ENCODE measurements at regions of chr4 and their contacts with region 1.

Region 1: DNA sequence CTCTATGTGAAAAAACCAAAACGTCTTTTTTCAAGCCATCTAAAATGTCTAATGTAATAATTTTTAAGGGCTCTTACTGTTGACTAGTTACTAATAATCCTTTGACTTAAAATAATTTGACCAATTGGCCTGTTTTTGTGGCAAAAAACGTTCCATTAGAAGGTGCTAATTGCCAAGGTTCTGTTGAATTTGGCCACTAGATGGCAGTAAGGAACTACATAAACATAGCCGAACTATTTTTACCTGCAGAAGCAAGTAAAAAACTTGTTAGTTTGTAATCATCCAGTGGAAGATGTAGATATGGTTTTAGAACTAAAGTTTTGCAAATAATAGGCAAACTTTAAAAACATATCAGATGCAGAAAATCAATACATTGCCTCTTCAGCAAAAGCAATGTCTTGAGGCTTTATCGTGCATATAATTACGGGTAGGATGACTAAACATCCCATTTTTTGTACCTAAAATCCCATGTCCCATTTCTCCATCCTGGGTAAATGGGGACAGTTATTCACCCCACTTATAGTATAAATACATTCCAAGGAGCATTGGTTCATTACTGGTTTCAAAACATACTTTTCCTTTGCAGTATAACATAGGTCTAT is 57.6 kb downstream of the PROM1 start:
- DNase-seq: peak in 7 of 9 donors; percentile 21 to 64 (median 56)
- ATAC-seq: peak; percentile 34
- H3K4me3 ChIP-seq: no peak overlapping the region
- H3K4me3 Mint-ChIP-seq: no peak overlapping the region
- H3K27ac ChIP-seq: no peak overlapping the region
- H3K27ac Mint-ChIP-seq: no peak overlapping the region
- H3K4me1 ChIP-seq: no peaks in the 10 kb centered on the region
- H3K4me1 Mint-ChIP-seq: no peaks in the 10 kb centered on the region
- H3K27me3 ChIP-seq: peaks cover 0 to 4% of the 10 kb centered on the region in 2 donors
- H3K27me3 Mint-ChIP-seq: peaks cover 0 to 26% (median 14%) of the 10 kb centered on the region in 5 donors

Region 2: GRCh38 chr4:14143892-14144291 is 1882.4 kb before region 1 on chr4:
- CTCF ChIA-PET with region 1: no interaction called
- POLR2A ChIA-PET with region 1: no interaction called
- intact Hi-C with region 1: no loop called
- DNase-seq: no peak
- ATAC-seq: no peak
- H3K4me3 ChIP-seq: no peak overlapping the region
- H3K4me3 Mint-ChIP-seq: no peak overlapping the region
- H3K27ac ChIP-seq: no peak overlapping the region
- H3K27ac Mint-ChIP-seq: no peak overlapping the region
- H3K4me1 ChIP-seq: no peaks in the 10 kb centered on the region
- H3K4me1 Mint-ChIP-seq: no peaks in the 10 kb centered on the region
- H3K27me3 ChIP-seq: no peaks in the 10 kb centered on the region
- H3K27me3 Mint-ChIP-seq: no peaks in the 10 kb centered on the region

Region 3: DNA sequence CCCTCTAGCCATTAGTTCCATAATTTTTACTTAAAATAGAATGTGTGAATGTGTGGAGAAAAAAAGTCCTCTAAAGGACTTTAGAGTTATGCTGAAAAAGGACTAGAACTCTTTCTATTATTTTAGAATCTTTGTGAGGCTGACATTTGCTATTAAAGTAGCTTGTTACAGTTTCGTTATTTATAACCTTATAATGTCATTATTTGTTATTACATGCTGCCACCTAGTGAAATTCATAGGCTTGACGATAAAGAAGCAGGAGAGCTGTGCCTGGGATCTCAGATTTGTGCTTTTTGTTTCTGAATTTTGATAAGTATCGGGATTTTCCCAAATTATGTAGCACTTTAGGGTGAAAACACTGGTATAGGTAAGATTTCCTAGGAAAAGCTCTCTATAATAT is 238.5 kb after region 1 on chr4:
- CTCF ChIA-PET with region 1: interaction called, 30 read pairs
- POLR2A ChIA-PET with region 1: no interaction called
- intact Hi-C with region 1: loop called (anchors 1 kb)
- DNase-seq: peak in 7 of 9 donors; percentile 14 to 59 (median 34)
- ATAC-seq: peak; percentile 40
- H3K4me3 ChIP-seq: no peak overlapping the region
- H3K4me3 Mint-ChIP-seq: no peak overlapping the region
- H3K27ac ChIP-seq: no peak overlapping the region
- H3K27ac Mint-ChIP-seq: no peak overlapping the region
- H3K4me1 ChIP-seq: peaks cover 0 to 3% of the 10 kb centered on the region in 2 donors
- H3K4me1 Mint-ChIP-seq: peaks cover 0 to 11% (median 4%) of the 10 kb centered on the region in 7 donors
- H3K27me3 ChIP-seq: no peaks in the 10 kb centered on the region
- H3K27me3 Mint-ChIP-seq: peaks cover 0 to 2% (median 0%) of the 10 kb centered on the region in 5 donors

Region 4: GRCh38 chr4:16443504-16444088 is 417.3 kb after region 1 on chr4:
- CTCF ChIA-PET with region 1: no interaction called
- POLR2A ChIA-PET with region 1: no interaction called
- intact Hi-C with region 1: loop called in 1 of 2 experiments (anchors 1 kb)
- DNase-seq: peak in 2 of 9 donors; percentile 1 to 12
- ATAC-seq: no peak
- H3K4me3 ChIP-seq: no peak overlapping the region
- H3K4me3 Mint-ChIP-seq: no peak overlapping the region
- H3K27ac ChIP-seq: no peak overlapping the region
- H3K27ac Mint-ChIP-seq: no peak overlapping the region
- H3K4me1 ChIP-seq: no peaks in the 10 kb centered on the region
- H3K4me1 Mint-ChIP-seq: no peaks in the 10 kb centered on the region
- H3K27me3 ChIP-seq: no peaks in the 10 kb centered on the region
- H3K27me3 Mint-ChIP-seq: peaks cover 0 to 16% (median 8%) of the 10 kb centered on the region in 5 donors

Region 5: DNA sequence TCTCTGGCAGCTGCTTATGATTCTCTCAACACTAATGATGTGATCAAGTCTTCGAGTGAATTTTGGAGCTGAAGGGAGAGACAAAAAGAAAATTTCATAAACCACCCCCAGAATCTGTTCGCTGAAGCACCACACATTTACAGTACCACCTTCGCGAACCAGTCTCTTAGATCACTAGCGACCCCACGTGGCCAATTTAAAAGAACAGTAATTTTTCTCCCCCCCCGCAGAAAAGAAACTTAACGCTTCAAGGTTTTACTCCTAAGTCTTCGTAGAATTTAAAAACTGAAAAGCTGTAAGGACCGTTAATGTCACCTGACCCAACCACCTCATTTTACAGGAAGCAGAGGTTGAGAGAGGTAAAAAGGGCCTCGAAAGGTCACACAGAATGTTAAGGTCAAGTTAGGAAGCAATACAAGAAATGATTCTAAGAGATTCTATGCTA is 1298.1 kb after region 1 on chr4:
- CTCF ChIA-PET with region 1: no interaction called
- POLR2A ChIA-PET with region 1: no interaction called
- intact Hi-C with region 1: loop called in 1 of 2 experiments (anchors 5 kb)
- DNase-seq: peak in 7 of 9 donors; percentile 16 to 43 (median 31)
- ATAC-seq: peak; percentile 56
- H3K4me3 ChIP-seq: no peak overlapping the region
- H3K4me3 Mint-ChIP-seq: peak overlapping the region; percentile 22 to 77 (median 57)
- H3K27ac ChIP-seq: no peak overlapping the region
- H3K27ac Mint-ChIP-seq: peak overlapping the region in 5 of 9 donors; percentile 17 to 67 (median 42)
- H3K4me1 ChIP-seq: peaks cover 0 to 6% of the 10 kb centered on the region in 2 donors
- H3K4me1 Mint-ChIP-seq: peaks cover 8 to 14% (median 10%) of the 10 kb centered on the region in 7 donors
- H3K27me3 ChIP-seq: no peaks in the 10 kb centered on the region
- H3K27me3 Mint-ChIP-seq: peaks cover 0 to 4% (median 0%) of the 10 kb centered on the region in 5 donors